ENCODE measurements at regions of chr7 and their contacts with region 1.

Region 1: DNA sequence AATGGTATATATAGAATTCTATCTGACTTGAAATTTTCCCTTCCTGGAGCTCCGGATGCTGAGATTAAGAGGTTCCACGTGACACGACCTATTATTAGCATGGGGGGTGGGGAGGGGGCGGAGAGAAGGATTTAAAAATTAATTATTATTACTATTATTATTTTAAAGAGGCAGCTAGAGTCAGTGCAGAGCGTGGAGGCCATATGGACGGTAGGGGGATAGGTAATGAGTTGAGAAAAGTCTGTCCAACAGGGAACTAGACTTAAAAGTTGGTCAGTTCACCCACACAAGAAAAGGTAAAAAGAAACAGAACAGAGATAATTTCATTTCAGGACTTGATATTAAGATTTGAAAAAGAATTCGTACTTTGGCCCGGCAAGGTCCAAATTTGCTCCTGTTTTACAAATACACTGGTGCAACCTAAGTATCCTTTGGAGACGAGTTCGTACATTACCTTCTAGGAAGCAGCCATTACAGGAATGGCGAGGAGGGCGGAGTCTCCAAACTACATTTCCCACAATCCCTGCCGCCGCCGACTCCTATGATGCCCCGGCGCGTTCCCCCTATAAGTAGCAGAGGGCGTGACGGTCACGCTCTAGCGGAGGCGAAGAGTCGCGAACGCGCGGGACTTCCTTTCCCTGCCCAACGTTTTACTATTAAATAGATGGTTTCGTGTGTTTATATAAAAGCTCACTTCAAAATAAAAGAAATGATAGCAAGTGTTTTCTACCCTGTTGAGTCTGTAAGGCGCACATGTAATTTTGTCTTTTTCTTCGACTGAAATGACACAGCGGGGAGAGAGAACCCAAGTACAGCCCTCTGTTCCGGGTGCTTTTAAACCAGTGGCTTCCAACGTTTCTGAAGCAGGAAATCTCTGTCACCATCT is at the start of gene SMIM30:
- DNase-seq: peak; percentile 88
- H3K4me3 ChIP-seq: peak within 1 kb of the TSS; percentile 49
- H3K4me3 Mint-ChIP-seq: peak within 1 kb of the TSS; percentile 97
- H3K27ac Mint-ChIP-seq: peak within 1 kb of the TSS; percentile 93
- H3K4me1 ChIP-seq: peaks cover 6% of the 10 kb centered on the region
- H3K4me1 Mint-ChIP-seq: no peaks in the 10 kb centered on the region
- H3K27me3 ChIP-seq: no peaks in the 10 kb centered on the region
- H3K27me3 Mint-ChIP-seq: no peaks in the 10 kb centered on the region
- CTCF ChIP-seq: peak in 1 of 2 experiments; percentile 4
- total RNA-seq, gene SMIM30: 29.8 and 29.9 TPM in 2 replicates

Region 2: DNA sequence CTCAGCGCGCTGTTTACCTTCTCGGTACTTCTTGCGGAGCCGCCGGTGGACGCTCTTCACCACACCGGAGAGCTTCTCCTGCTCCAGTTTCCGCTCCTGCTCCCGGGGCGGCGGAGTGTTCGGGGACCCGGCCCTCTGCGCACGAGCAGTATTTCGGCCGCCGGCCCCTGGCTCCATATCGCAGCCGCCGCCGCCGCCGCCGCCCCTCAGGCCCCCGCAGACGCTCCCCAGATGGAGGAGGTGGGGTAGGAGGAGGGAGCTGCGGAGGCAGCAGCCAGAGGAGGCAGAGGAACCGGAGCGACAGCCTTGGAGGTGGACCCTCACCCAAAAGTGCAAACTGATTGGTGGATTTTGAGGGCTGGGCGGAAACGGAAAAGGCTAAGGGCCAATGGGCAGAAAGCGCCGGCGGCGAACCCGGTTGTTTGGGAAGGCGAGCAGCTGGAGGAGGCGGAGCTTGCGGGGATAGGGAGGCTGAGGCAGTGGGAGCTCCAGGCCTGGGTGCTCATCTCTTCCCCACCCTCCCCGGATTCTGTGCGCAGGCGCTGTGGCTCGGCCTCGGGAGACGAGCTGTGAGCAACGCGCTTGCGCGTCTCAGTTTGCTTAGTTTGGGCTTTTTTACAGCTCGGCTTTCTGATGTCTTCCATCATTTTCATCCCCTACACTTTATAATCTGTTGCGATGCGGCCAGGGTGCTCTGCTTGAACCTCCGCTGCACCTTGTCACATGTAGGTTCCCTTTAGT is 178.6 kb before region 1 on chr7:
- CTCF ChIA-PET with region 1: interaction called, 3 read pairs
- POLR2A ChIA-PET with region 1: no interaction called
- intact Hi-C with region 1: loop called (anchors 1 kb)
- DNase-seq: peak; percentile 99
- H3K4me3 ChIP-seq: peak overlapping the region; percentile 87
- H3K4me3 Mint-ChIP-seq: peak overlapping the region; percentile 89
- H3K27ac Mint-ChIP-seq: peak overlapping the region; percentile 91
- H3K4me1 ChIP-seq: peaks cover 6% of the 10 kb centered on the region
- H3K4me1 Mint-ChIP-seq: no peaks in the 10 kb centered on the region
- H3K27me3 ChIP-seq: no peaks in the 10 kb centered on the region
- H3K27me3 Mint-ChIP-seq: no peaks in the 10 kb centered on the region
- CTCF ChIP-seq: no peak

Region 3: DNA sequence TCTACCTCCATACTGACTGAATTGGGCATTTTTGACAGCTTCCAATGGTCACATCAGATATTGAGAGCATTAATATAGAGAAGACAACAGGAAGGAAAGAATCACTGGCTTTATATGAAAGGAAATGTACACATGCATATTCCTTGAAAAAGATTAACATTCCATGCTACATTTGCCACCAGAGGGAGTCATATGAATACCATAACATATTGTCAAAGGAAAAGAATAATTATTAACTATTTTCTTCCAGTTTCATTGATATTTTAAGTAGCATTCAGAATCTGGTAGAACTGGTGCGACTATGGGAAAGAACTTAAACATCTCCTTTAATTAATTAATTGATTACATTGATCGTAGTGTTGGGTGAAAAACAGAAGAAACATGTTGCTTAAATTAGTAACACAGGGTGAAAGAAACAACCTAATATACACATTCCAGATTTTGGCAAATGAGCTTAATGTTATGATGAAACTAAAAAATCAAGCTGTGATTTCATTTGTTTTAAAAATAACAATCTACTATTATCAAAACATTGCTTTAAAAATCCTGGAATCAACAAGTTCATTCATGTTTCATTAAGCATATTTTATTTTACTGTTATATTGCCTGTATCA is 103.2 kb before region 1 on chr7:
- CTCF ChIA-PET with region 1: no interaction called
- POLR2A ChIA-PET with region 1: no interaction called
- intact Hi-C with region 1: loop called (anchors 1 kb)
- DNase-seq: peak in 1 of 2 experiments; percentile 26
- H3K4me3 ChIP-seq: no peak overlapping the region
- H3K4me3 Mint-ChIP-seq: no peak overlapping the region
- H3K27ac Mint-ChIP-seq: no peak overlapping the region
- H3K4me1 ChIP-seq: no peaks in the 10 kb centered on the region
- H3K4me1 Mint-ChIP-seq: no peaks in the 10 kb centered on the region
- H3K27me3 ChIP-seq: no peaks in the 10 kb centered on the region
- H3K27me3 Mint-ChIP-seq: peaks cover 3% of the 10 kb centered on the region
- CTCF ChIP-seq: peak; percentile 38 to 42

Region 4: GRCh38 chr7:113086431-113086888 is 31.9 kb before region 1 on chr7 and contains the start of gene GPR85:
- CTCF ChIA-PET with region 1: no interaction called
- POLR2A ChIA-PET with region 1: no interaction called
- intact Hi-C with region 1: loop called (anchors 2 kb)
- DNase-seq: peak in 1 of 2 experiments; percentile 29
- H3K4me3 ChIP-seq: peak within 1 kb of the TSS; percentile 24; the same call in 1 of the 2 replicates
- H3K4me3 Mint-ChIP-seq: peak within 1 kb of the TSS; percentile 59
- H3K27ac Mint-ChIP-seq: no peak within 1 kb of the TSS
- H3K4me1 ChIP-seq: no peaks in the 10 kb centered on the region
- H3K4me1 Mint-ChIP-seq: no peaks in the 10 kb centered on the region
- H3K27me3 ChIP-seq: no peaks in the 10 kb centered on the region
- H3K27me3 Mint-ChIP-seq: peaks cover 5% of the 10 kb centered on the region
- CTCF ChIP-seq: no peak
- total RNA-seq, gene GPR85: not detected in 2 replicates

Region 5: GRCh38 chr7:113421696-113422330 is 303.5 kb after region 1 on chr7:
- CTCF ChIA-PET with region 1: no interaction called
- POLR2A ChIA-PET with region 1: no interaction called
- intact Hi-C with region 1: no loop called
- DNase-seq: peak; percentile 83 to 84
- H3K4me3 ChIP-seq: no peak overlapping the region
- H3K4me3 Mint-ChIP-seq: no peak overlapping the region
- H3K27ac Mint-ChIP-seq: no peak overlapping the region
- H3K4me1 ChIP-seq: no peaks in the 10 kb centered on the region
- H3K4me1 Mint-ChIP-seq: no peaks in the 10 kb centered on the region
- H3K27me3 ChIP-seq: no peaks in the 10 kb centered on the region
- H3K27me3 Mint-ChIP-seq: no peaks in the 10 kb centered on the region
- CTCF ChIP-seq: peak; percentile 84 to 95

Measured in Caco-2 (cell line).